Mammary epithelial cell (primary cell): ENCODE measurements at regions of chr5 and their contacts with region 1.

Region 1: DNA sequence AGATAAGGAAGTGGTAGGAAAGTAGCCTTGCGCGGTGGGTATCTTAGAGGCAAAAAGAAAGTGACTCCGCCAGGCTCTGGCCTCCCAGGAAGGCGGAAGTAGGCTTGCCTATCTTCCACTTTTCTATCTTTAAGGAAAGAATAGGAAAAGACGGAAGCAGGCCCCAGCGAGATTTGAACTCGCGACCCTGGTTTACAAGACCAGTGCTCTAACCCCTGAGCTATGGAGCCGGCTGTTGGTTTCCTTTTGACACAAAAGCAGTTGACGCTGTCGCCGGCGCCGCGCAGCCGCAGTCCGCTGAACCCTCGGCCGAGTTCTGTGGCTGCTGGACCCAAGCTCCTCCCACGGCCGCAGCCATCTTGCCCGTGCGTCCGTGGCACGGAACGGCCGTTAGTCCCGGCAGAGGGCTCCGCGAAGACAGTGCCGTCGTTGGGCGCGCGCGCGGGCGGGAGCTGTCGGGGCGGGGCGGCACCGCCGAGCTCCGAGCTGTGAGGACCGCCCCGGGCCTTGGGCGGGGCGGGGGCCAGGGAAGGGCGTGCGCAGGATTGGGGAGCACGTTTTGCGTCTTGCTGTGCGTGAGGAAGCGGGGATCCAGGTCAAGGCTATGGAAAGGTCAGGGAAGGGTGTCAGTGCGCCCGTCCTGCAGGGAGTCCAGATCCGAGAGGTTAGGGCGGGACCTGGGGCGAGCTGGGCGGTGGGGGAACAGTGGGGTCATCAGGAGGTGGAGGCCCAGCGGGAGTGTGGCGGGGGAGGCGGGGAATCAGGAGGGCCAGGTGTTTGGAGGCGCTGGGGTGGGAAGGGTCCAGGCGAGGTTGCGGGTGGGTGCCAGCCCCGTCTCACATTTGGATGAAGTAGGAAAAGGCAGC is 13.2 kb downstream of the TRIM7 start:
- DNase-seq: peak; percentile 96
- H3K4me3 ChIP-seq: peak overlapping the region; percentile 77 to 87 (median 78)
- H3K27ac ChIP-seq: peak overlapping the region; percentile 9
- H3K4me1 ChIP-seq: peaks cover 22% of the 10 kb centered on the region
- H3K27me3 ChIP-seq: no peaks in the 10 kb centered on the region
- CTCF ChIP-seq: no peak

Region 2: GRCh38 chr5:180784497-180785097 is 407.2 kb before region 1 on chr5:
- CTCF ChIA-PET with region 1: interaction called, 14 read pairs
- dilution Hi-C with region 1: no loop called
- in situ Hi-C with region 1: no loop called
- intact Hi-C with region 1: no loop called
- DNase-seq: peak; percentile 57
- H3K4me3 ChIP-seq: no peak overlapping the region
- H3K27ac ChIP-seq: no peak overlapping the region
- H3K4me1 ChIP-seq: peaks cover 21% of the 10 kb centered on the region
- H3K27me3 ChIP-seq: no peaks in the 10 kb centered on the region
- CTCF ChIP-seq: peak; percentile 86 to 91

Region 3: GRCh38 chr5:181159286-181159829 is 32.4 kb before region 1 on chr5:
- CTCF ChIA-PET with region 1: no interaction called
- dilution Hi-C with region 1: no loop called
- in situ Hi-C with region 1: no loop called
- intact Hi-C with region 1: no loop called
- DNase-seq: peak; percentile 66
- H3K4me3 ChIP-seq: no peak overlapping the region
- H3K27ac ChIP-seq: no peak overlapping the region
- H3K4me1 ChIP-seq: peaks cover 13% of the 10 kb centered on the region
- H3K27me3 ChIP-seq: no peaks in the 10 kb centered on the region
- CTCF ChIP-seq: peak; percentile 89 to 91

Region 4: DNA sequence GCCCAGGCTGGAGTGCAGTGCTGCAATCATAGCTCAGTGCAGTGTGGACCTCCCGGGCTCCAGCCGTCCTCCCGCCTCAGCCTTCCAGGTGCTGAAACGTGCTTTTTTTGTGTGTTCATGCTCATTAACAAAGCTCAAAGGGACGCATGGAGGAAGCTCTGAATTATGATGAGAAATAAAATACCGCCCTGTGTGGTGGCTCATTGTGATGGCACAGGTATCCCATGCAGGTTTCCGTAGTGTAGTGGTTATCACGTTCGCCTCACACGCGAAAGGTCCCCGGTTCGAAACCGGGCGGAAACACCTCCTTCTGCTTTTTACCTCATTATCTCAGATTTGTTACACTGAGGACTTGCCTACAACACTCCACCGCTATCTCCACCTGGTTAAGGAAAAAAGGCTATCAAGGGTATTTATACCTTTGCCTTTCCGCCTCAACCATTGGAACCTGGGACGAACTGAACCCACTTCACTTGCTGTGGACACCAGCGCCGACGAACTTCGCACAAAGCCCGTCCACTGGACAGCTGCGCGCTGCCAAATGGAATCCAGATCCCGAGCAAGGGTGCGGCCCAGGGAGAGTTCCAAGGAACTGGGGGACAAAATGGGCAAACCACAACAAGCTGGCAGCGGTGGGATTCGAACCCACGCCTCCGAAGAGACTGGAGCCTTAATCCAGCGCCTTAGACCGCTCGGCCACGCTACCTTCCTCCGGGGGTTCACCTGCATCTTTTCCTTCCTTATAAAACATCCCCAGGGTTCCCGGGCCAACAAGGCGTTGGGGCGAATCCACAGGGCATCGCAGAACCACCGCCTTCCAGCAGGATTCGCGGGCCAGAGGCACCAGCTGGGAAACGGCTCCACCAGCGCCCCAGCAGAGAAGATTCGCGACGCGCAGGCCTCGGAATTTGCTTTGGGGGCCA is 18.1 kb before region 1 on chr5:
- CTCF ChIA-PET with region 1: no interaction called
- dilution Hi-C with region 1: no loop called
- in situ Hi-C with region 1: no loop called
- intact Hi-C with region 1: loop called (anchors 1 kb)
- DNase-seq: peak; percentile 95
- H3K4me3 ChIP-seq: peak overlapping the region; percentile 33 to 41 (median 37)
- H3K27ac ChIP-seq: no peak overlapping the region
- H3K4me1 ChIP-seq: peaks cover 5% of the 10 kb centered on the region
- H3K27me3 ChIP-seq: no peaks in the 10 kb centered on the region
- CTCF ChIP-seq: no peak

Region 5: DNA sequence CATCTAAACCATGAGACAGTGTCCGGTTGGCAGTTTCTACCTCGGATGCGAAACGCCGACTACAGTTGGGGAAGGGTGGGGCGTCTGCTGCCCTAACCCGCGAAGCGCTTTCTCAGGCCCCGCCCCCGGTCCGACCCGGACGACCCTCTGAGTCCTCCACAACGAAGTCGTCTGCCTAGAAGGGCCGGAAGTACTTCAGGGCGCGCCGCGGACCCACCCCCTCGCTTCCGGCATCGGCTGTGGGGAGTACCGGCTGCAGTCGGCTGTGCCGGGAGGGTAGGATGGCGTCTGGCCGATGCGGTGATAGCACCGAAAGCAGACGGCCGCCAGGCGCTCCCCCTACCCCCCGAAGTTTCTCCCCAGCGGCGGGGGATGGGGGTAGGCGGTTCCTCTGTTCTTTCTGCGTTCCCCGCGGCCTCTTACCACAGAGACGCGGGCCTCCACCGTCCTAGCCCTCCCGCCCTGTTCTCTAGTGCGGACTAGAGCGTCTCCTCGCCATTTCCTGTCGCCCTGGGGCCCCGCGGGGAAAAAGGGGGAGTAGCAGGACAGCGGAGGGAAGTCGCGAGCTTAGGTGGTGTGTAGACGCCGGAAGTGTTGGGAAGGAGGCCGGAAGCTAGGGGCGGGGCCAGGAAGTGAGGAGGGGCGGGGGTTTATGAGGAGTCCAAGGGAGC is 31.4 kb after region 1 on chr5 and contains the start of gene TRIM41:
- CTCF ChIA-PET with region 1: no interaction called
- dilution Hi-C with region 1: no loop called
- in situ Hi-C with region 1: no loop called
- intact Hi-C with region 1: loop called (anchors 1 kb)
- DNase-seq: peak; percentile 97
- H3K4me3 ChIP-seq: peak within 1 kb of the TSS; percentile 86 to 99 (median 98)
- H3K27ac ChIP-seq: peak within 1 kb of the TSS; percentile 70
- H3K4me1 ChIP-seq: peaks cover 10% of the 10 kb centered on the region
- H3K27me3 ChIP-seq: no peaks in the 10 kb centered on the region
- CTCF ChIP-seq: peak in 1 of 2 donors; percentile 20
- total RNA-seq, gene TRIM41: 10.3 to 30.6 TPM

Region 6: GRCh38 chr5:181260387-181261319 is 68.9 kb after region 1 on chr5 and contains the start of gene TRIM52:
- CTCF ChIA-PET with region 1: no interaction called
- dilution Hi-C with region 1: no loop called
- in situ Hi-C with region 1: no loop called
- intact Hi-C with region 1: loop called (anchors 2 kb)
- DNase-seq: peak; percentile 84
- H3K4me3 ChIP-seq: peak within 1 kb of the TSS; percentile 58 to 78 (median 73)
- H3K27ac ChIP-seq: peak within 1 kb of the TSS; percentile 94
- H3K4me1 ChIP-seq: peaks cover 16% of the 10 kb centered on the region
- H3K27me3 ChIP-seq: no peaks in the 10 kb centered on the region
- CTCF ChIP-seq: no peak
- total RNA-seq, gene TRIM52: 5.7 to 6.0 TPM